ENCODE measurements at regions of chr16 and their contacts with region 1.

Region 1: GRCh38 chr16:3876695-3877094 is 3.8 kb downstream of the CREBBP start:
- DNase-seq: no peak
- CTCF ChIP-seq: no peak

Region 2: GRCh38 chr16:3787924-3788661 is 88.6 kb before region 1 on chr16:
- CTCF ChIA-PET with region 1: no interaction called
- POLR2A ChIA-PET with region 1: no interaction called
- DNase-seq: peak; percentile 57
- CTCF ChIP-seq: no peak

Region 3: DNA sequence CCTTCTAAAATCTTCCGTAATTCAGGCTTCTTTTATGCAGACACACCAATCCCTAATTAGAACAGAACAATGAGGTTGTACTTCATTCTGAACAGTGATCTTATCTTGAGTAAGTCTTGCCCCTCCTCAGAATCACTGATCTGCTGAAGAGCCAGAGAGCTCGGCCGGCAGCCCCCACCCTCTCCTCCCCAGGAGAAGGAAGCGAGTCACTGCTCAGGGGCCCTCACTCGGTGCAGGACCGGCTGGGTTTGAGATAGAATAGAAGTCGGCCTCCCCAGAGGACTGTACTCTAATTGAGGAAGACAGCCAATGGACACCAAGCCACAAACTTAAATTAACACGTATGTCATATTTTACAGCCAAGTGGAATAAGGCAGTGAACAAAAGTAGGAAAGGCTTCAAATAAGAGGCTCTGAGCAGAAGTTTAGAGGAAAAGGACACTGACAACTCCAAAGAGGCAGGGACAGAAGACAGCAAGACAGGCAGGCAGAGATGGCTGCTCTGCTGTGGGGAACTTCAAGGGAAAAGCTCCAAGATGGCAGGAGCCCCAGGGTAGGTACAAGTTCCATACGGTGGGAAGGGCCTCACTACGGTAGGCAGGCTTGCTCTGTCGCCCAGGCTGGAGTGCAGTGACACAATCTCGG is 14.8 kb before region 1 on chr16:
- CTCF ChIA-PET with region 1: interaction called, 10 read pairs
- POLR2A ChIA-PET with region 1: interaction called, 3 read pairs
- DNase-seq: no peak
- CTCF ChIP-seq: no peak

Region 4: GRCh38 chr16:3890091-3890490 is 13.4 kb after region 1 on chr16:
- CTCF ChIA-PET with region 1: no interaction called
- POLR2A ChIA-PET with region 1: no interaction called
- DNase-seq: no peak
- CTCF ChIP-seq: no peak